Activated T-helper 1 cell treated with anti-CD3 and anti-CD28 coated beads, Interleukin-12 subunit alpha, Interleukin-12 subunit beta, Interleukin-2, Interleukin-4 antibody, amounts not matched to agents 30 ng/mL and 10 ng/mL and 1 ng/mL, durations not matched to agents 14 hours and 24 hours and 36 hours (primary cell): ENCODE measurements at regions of chr6 and their contacts with region 1.

Region 1: DNA sequence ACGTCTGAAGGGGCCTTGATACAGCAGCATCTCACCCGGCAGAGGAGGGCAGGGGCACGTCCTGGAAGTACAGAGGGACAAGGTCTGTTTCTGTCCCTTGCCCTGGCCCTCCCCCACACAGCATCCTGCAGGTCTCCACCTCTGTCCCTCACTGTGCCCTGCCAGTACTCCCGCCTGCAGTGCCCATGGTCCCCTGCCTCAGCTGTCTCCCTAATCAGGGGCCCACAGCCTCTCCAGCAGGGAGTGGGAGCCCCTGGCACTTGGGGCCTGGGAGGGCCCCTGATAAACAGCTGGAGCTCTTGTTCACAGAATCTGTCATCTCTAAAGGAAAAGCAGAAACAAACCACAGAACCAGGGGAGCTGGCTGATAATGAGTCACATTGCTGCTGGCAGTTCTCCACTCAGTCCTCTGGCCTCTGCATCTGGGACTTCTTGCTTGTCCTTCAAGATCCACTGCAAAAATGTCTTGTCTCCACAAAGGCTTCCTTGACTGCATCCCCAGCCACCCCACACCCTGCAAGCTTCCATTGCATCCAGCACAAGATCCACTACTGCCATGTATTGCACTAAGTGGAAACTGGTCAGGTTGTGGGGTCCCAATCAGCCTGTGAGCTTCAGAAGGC is 33.2 kb upstream of the TAF8 start:
- DNase-seq: no peak
- H3K4me3 Mint-ChIP-seq: peak overlapping the region; percentile 69
- H3K27ac Mint-ChIP-seq: peak overlapping the region; percentile 90
- H3K4me1 Mint-ChIP-seq: peaks cover 55% of the 10 kb centered on the region
- H3K27me3 Mint-ChIP-seq: peaks cover 1% of the 10 kb centered on the region

Region 2: GRCh38 chr6:41976794-41977484 is 40.2 kb before region 1 on chr6:
- intact Hi-C with region 1: loop called (anchors 2 kb)
- DNase-seq: no peak
- H3K4me3 Mint-ChIP-seq: no peak overlapping the region
- H3K27ac Mint-ChIP-seq: peak overlapping the region; percentile 84
- H3K4me1 Mint-ChIP-seq: peaks cover 39% of the 10 kb centered on the region
- H3K27me3 Mint-ChIP-seq: no peaks in the 10 kb centered on the region

Region 3: DNA sequence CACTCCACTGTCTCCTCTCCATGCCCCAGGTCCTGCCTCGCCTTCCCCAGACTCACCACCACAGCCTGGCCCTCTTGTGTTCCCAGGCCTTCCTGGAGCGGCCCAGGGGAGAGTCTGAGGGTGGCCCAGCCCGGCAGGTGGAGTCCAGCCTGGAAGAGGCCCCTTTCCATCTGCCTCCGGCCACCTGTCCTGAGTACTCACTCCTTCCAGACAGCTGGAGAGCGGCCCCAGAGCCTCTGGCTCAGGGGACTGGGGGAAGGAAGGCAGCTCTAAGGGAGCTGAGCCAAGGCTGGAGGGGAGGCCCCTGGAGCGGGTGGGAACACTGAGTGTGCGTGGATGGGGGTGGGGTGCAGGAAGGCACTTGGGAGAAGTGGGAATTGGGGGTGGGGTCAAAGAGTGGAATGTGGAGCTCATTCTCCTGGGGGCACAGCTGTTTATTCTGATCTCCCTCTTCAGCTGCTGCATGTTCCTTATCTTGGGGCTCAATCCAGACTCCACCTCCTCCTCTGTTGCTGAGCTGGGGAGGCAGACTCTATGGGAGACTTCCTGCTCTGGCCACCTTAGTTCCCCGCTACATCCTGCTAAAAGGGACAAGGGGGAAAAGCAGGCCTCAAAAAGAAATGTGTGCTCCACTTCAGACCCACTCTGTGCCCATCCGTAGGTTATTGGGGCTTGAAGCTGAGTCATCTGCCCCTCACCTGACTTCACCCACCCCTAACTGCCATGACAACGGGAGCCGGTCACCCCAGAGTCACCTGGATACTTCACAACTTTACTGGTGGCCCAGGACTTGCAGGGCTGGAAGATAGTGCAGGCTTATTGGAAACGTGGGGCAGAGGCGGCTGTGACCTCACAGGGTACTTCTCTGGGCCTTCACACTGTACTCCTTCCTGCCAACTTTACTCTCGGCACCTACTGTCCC is 13.7 kb after region 1 on chr6:
- intact Hi-C with region 1: loop called (anchors 1 kb)
- DNase-seq: no peak
- H3K4me3 Mint-ChIP-seq: peak overlapping the region; percentile 64
- H3K27ac Mint-ChIP-seq: peak overlapping the region; percentile 91
- H3K4me1 Mint-ChIP-seq: peaks cover 79% of the 10 kb centered on the region
- H3K27me3 Mint-ChIP-seq: no peaks in the 10 kb centered on the region